Common myeloid progenitor, CD34-positive (primary cell): ENCODE measurements at regions of chr1 and their contacts with region 1.

Region 1: GRCh38 chr1:77533660-77534305 is 148.7 kb downstream of the ZZZ3 start:
- DNase-seq: peak; percentile 66 to 84 (median 78)
- H3K4me3 ChIP-seq: no peak overlapping the region
- H3K27ac ChIP-seq: no peak overlapping the region
- H3K4me1 ChIP-seq: peaks cover 0 to 8% (median 0%) of the 10 kb centered on the region in 4 experiments
- H3K27me3 ChIP-seq: no peaks in the 10 kb centered on the region

Region 2: GRCh38 chr1:77399250-77400086 is 134.3 kb before region 1 on chr1:
- CTCF ChIA-PET with region 1: interaction called, 12 read pairs
- POLR2A ChIA-PET with region 1: interaction called, 3 read pairs
- DNase-seq: no peak
- H3K4me3 ChIP-seq: no peak overlapping the region
- H3K27ac ChIP-seq: no peak overlapping the region
- H3K4me1 ChIP-seq: no peaks in the 10 kb centered on the region
- H3K27me3 ChIP-seq: no peaks in the 10 kb centered on the region

Region 3: DNA sequence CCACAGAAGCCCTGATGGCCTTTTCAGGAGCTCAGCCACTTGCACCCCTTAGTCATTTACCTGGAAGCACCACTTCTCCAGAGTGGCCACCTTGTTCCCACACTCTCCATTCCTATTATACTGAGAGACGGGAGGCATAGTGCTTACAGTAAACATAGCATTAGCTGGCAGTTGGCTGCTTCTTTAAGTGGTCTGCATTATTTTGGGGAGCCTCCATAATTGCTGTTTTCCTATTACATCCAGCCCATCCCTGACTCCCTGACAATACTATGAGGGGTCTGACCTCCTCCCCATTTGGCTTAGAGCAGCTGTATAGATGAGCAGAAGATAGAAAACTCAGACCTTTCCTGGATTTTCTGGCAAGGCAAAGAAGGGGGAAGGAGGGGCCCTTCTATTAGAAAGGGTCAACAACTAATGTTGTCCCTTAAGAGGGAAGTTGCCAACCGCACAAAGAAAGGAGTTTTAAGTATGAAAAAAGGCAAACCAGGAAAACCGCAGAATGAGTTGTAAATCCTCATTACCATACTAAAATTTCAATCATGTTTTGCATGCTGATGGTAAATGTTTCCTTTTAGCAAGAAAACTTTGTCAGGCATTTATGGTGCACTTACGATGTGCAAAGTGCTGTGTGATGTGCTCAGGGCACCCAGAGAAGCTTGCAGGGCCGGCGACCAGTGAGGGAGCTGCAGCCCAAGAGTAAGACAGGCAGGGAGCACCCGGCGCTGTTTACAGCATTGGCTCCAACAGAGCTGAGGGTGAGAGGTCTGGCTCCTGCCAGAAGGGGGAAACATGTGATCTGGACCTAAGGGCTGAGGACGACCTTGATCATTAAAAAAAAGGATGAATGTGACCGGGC is 18.6 kb before region 1 on chr1:
- CTCF ChIA-PET with region 1: interaction called, 18 read pairs
- POLR2A ChIA-PET with region 1: no interaction called
- DNase-seq: peak; percentile 14 to 50 (median 49)
- H3K4me3 ChIP-seq: peak overlapping the region in 2 of 7 experiments; percentile 37 to 43
- H3K27ac ChIP-seq: no peak overlapping the region
- H3K4me1 ChIP-seq: peaks cover 0 to 18% (median 12%) of the 10 kb centered on the region in 4 experiments
- H3K27me3 ChIP-seq: no peaks in the 10 kb centered on the region

Region 4: DNA sequence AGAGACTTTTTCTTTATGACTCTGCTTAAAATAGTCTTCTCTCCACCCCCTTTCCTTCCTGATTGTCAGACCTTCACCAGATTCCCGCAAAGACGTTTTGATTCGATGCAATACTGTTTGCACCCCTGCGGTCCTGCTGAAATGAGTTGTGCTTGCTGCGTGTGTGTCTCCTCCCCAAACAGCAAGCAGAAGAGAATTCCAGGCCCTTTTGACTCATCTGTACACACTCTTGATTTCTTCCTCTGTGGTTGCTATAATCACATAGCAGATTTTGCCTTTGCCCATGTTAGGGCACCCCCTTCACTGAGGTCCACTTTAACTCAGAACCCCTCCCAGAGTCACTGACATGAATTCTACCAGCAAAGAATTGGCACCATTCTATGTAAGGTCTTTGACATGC is 12.2 kb after region 1 on chr1:
- CTCF ChIA-PET with region 1: interaction called, 17 read pairs
- POLR2A ChIA-PET with region 1: no interaction called
- DNase-seq: peak in 1 of 3 donors; percentile 14
- H3K4me3 ChIP-seq: no peak overlapping the region
- H3K27ac ChIP-seq: no peak overlapping the region
- H3K4me1 ChIP-seq: peaks cover 0 to 17% (median 7%) of the 10 kb centered on the region in 4 experiments
- H3K27me3 ChIP-seq: no peaks in the 10 kb centered on the region